ENCODE measurements at regions of chr16 and their contacts with region 1.

Region 1: DNA sequence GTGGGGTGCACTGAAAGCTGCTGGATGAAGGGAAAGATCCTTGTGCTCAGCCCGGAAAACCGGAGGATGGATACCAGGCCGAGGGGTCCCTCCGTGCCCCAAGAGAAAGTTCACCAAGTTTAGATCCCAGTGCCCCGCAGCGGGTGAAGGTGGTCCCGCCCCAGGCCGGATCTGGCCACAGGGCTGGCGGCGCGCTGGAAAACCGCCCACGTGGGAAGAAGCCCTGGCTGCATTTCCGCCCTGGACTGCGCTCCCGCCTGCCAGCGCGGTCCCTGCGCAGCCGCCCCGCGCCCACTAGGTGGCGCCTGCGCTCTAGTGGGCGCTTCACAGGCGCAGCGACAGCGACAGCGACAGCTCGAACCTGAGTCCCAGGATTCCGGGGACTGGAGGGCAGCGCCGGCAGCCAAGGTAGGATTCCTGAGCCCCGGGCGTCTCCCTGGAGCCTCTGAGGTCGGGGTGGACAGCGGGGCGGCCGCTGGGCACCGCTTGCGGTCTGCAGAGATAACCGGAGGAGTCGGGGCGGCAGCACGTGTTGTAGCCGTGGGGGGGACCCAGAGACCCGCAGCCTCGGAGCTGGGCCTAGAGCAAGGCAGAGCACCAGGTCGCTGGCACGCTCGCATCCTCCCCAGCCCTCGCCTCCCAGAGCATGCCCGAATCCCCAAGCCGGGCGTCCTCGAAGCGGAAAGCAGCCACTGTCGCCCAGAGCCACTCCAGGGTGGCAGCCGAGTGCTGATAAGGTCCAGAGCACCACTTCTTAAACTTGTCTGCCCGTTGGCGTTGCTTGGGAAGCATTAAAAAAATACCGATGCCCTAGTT is at the start of gene CHD9:
- DNase-seq: peak; percentile 89
- ATAC-seq: peak; percentile 91
- total RNA-seq, gene CHD9: 137 TPM

Region 2: DNA sequence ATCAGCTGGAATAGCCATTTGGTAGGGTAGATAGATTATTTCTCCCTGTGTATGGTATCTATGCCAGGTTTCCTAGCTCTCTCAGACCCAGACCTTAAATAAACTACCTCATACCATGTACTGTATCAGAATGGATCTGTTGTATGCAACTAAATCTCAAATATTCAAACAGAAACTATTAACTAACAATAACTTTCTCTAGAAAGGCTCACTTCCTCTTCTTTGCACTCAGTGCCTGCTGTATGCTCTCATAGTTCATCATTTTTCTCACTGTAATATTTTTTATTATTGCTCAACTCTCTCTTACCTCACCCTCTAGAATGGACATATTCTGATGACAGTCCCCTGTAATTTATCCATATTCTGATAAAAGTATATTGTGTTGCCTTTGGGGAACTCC is 690.4 kb before region 1 on chr16:
- intact Hi-C with region 1: no loop called
- DNase-seq: no peak
- ATAC-seq: no peak

Region 3: DNA sequence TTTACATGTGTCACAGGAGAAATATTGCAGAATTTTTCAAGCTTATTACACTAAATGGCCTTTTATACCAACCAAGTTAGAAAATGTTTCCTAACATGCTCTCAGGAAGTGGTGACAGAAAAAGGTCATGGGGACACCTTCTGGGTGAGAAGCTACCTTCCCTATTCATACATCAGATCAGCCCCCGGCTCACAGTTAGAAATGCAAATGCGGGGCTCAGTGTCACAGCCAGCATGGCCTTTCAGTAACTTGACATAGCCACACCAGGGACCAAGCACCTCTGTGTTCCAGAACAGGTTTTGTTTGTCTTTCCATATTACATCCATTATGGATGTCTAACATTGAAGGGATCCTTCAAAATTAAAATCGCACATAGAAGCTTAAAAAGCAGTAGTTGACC is 61.7 kb before region 1 on chr16:
- intact Hi-C with region 1: no loop called
- DNase-seq: no peak
- ATAC-seq: no peak

Region 4: DNA sequence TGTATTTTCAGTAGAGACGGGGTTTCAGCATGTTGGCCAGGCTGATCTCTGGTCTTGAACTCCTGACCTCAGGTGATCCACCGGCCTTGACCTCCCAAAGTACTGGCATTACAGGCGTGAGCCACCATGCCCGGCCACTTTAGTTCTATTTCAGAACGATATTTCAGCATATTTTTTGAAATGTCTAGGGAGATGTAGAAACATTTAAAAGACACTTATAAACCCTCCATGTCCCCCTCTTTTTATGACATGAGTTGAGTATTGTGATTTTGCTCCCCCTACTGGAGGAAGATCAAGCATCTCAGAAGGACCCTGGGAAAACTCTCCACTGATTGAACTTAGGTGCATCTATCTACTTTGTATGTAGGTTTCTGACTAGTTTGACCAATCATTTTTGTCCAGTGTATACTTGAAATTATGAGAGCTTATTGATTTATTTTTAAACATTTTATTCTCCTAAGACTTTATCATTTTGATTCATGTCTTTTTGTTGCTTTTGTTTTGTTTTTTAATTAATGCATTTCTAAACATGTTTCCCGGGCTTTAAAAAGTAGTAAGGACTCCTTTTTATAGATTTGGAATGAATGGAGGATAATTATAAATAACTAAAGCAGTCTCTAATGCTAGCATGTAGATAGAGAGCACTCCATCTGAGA is 105.0 kb after region 1 on chr16:
- intact Hi-C with region 1: loop called (anchors 10 kb)
- DNase-seq: no peak
- ATAC-seq: peak; percentile 82

Region 5: GRCh38 chr16:53220585-53220984 is 165.7 kb after region 1 on chr16:
- intact Hi-C with region 1: loop called (anchors 10 kb)
- DNase-seq: no peak
- ATAC-seq: peak; percentile 28